SK-N-SH (cell line): ENCODE measurements at regions of chr12 and their contacts with region 1.

Region 1: DNA sequence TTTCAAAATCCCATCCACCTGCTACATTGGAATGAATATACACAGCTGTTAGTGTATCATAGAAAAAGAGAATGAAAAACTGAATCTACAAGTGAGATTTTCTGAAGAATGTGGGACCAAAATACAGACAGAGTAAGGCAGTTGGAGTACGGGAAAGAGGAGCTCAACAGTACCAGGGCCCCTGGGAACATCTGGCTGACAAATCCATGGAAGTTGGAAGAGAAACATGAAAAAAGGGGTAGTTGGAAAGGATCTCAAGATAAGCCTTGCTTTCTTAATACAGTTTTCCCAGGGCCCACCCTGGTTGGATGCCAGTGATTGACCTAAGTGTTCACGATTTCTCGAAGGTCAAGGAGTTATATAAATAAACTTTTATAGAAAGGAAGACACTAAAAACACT is 54.0 kb upstream of the SLCO1C1 start:
- DNase-seq: no peak
- H3K4me3 ChIP-seq: no peak overlapping the region
- H3K27ac ChIP-seq: no peak overlapping the region
- H3K4me1 ChIP-seq: peaks cover 0 to 2% of the 10 kb centered on the region in 2 experiments; a peak in 2 of 4 replicates
- H3K27me3 ChIP-seq: no peaks in the 10 kb centered on the region
- CTCF ChIP-seq: no peak
- EP300 ChIP-seq: no peak
- RAD21 ChIP-seq: no peak

Region 2: DNA sequence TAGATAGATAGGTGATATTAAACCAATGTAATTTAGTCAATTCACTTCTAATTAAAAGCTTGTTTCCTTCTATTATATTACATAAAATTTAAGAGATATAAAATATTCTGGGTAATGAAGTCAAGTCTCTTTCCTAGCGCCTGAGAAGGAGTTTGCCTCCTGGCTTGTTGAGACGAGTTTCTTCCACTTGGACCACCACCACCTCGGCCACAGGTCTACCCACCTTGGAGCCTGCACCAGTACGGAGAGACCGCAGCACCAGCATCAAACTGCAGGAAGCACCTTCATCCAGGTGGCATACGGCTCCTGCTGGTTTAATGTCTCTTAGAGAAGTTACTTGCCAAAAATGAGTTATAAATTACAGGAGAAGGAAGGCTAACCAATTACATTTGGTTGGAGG is 25.0 kb before region 1 on chr12:
- CTCF ChIA-PET with region 1: no interaction called
- POLR2A ChIA-PET with region 1: no interaction called
- DNase-seq: no peak
- H3K4me3 ChIP-seq: no peak overlapping the region
- H3K27ac ChIP-seq: no peak overlapping the region
- H3K4me1 ChIP-seq: peaks cover 0 to 2% of the 10 kb centered on the region in 2 experiments; a peak in 2 of 4 replicates
- H3K27me3 ChIP-seq: no peaks in the 10 kb centered on the region
- CTCF ChIP-seq: no peak
- EP300 ChIP-seq: no peak
- RAD21 ChIP-seq: no peak

Region 3: GRCh38 chr12:20798561-20798960 is 157.5 kb after region 1 on chr12:
- CTCF ChIA-PET with region 1: interaction called, 10 read pairs
- POLR2A ChIA-PET with region 1: no interaction called
- DNase-seq: peak; percentile 14
- H3K4me3 ChIP-seq: no peak overlapping the region
- H3K27ac ChIP-seq: no peak overlapping the region
- H3K4me1 ChIP-seq: no peaks in the 10 kb centered on the region
- H3K27me3 ChIP-seq: no peaks in the 10 kb centered on the region
- CTCF ChIP-seq: peak; percentile 54
- EP300 ChIP-seq: no peak
- RAD21 ChIP-seq: peak; percentile 68